Adrenal gland (tissue), 19 donors: ENCODE measurements at regions of chr2 and their contacts with region 1.

Region 1: DNA sequence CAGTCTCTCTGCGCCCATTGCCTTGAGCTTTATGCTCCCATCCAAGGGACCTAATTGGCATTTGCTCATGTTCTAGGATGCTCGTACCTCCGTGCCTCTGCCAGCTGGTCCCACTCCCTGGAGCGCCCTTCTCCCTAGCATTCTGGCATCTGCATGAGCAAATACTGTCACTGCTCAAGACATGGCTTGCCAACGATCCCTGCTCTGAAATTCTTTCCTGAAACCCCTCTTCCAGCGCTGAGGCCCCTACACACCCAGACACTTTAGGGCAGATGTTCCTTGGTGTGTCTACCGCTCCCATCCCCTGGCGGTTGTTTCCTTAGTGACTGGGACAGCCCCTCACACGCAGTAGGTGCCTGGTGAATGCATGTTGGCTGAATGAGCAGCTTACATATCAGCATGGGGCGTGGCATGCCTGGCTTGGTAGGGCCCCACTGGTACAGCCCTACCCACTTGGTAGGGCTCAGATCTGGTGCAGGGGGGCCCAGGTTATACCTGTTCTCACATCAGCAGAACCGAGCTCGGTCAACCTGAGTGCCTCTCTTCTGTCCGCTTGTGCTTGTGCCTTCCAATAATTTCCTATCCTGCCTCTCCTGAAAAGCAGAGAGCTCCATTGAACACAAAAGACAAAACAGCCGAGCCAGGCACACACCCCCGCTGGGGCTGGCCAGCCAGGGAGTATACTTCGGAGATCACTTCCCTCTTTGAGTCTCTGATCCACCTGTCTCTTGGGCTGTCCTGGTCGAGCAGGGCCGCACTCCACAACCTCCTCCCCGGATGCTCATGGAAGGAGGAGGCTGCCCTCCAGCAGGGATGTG is 59.2 kb downstream of the INHBB start:
- DNase-seq: no peak
- H3K4me3 ChIP-seq: no peak overlapping the region
- H3K27ac ChIP-seq: no peak overlapping the region
- H3K4me1 ChIP-seq: no peaks in the 10 kb centered on the region
- H3K27me3 ChIP-seq: no peaks in the 10 kb centered on the region
- CTCF ChIP-seq: no peak
- POLR2A ChIP-seq: no peak

Region 2: DNA sequence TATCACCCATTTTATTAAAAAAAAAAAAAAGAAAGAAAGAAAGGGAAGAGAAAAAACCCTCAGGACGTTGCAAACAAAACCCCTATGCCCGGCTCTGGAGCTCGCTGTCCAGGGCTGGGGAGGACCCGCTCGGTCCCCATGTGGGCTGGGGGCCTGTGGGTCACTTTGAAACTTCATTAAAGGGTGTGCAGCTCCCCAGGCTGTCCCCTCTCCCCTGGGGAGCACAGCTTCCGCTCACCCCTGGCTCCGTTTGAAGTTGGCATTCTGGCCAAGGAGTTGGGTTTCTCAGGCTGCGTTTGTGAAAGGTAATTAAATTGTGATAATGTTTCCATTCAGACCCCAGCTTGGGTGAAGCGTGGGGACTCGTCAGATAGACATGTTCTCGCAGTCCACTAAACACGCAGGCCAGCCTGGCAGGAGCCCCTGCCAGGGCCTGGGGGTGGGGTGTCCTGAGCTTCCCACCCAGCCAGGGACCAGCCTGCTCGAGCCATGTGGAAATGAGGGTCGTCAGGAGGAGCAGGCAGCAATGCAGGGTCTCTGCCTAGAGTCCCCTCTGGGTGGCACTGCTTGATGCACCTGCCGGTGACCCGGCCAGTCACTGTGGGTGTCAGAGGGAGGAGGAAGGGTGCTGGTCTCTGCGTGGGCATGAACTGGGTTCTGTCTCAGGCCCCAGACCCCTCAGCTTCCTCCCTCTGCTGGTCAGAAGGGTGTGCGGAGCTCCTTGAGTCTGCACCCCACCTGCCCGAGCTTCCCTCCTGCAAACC is 107.0 kb after region 1 on chr2:
- intact Hi-C with region 1: loop called in 1 of 2 experiments (anchors 5 kb)
- DNase-seq: no peak
- H3K4me3 ChIP-seq: no peak overlapping the region
- H3K27ac ChIP-seq: no peak overlapping the region
- H3K4me1 ChIP-seq: peaks cover 0 to 5% of the 10 kb centered on the region in 2 donors
- H3K27me3 ChIP-seq: no peaks in the 10 kb centered on the region
- CTCF ChIP-seq: no peak
- POLR2A ChIP-seq: no peak